Endothelial cell of umbilical vein (primary cell): ENCODE measurements at regions of chr9 and their contacts with region 1.

Region 1: DNA sequence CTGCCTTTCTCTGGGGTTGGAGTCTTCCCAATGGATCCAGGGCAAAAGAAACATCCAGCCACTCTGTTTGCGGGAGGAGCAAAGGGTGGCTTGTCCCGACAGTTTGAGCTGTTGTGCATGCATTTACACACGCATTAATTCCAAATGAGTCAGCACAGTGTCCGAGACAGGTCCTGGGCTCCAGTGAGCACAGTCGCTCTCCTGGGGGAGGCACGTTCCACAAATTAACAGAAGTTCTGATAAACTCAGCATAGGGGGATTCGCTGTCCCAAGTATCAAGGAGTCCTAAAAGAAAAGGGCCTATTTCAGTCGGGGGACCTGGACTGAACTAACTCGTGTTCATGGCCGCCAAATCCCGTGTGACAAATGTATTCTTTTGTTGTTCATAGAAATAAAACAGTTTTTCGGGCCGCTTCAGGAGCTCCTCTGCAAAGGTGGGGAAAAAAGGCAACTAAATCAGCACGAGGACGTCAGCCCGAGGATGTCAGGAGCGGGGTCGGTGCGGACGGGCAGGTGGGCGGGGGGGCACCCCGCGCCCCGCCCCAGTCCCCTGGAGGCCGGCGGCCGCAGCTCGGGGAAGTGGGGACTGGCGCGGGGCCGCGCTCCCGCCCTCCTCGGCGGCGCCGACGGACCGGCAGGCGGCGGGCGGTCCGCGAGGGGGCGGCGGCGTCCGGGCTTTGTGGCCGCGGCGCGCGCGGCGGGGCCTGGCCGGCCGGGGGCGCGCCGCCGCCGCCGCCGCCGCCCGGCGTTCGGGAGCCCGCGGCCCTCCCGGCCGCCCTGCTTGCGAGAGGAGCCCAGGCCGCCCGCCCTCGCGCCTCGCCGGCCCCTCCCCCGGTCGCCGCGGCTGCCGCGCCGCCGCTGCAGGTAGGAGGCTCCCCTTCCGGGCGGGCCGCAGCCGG is at the start of gene MSANTD3:
- DNase-seq: peak; percentile 84
- H3K4me3 ChIP-seq: peak within 1 kb of the TSS; percentile 91 to 96 (median 94)
- H3K27ac ChIP-seq: peak within 1 kb of the TSS; percentile 98
- H3K4me1 ChIP-seq: peaks cover 36% of the 10 kb centered on the region
- H3K27me3 ChIP-seq: no peaks in the 10 kb centered on the region
- CTCF ChIP-seq: no peak
- POLR2A ChIP-seq: peak; percentile 59
- total RNA-seq, gene MSANTD3: 82.7 and 88.5 TPM in 2 replicates

Region 2: GRCh38 chr9:100167915-100168654 is 258.7 kb before region 1 on chr9:
- CTCF ChIA-PET with region 1: no interaction called
- POLR2A ChIA-PET with region 1: no interaction called
- dilution Hi-C with region 1: no loop called
- intact Hi-C with region 1: no loop called
- DNase-seq: no peak
- H3K4me3 ChIP-seq: no peak overlapping the region
- H3K27ac ChIP-seq: no peak overlapping the region
- H3K4me1 ChIP-seq: peaks cover 8% of the 10 kb centered on the region
- H3K27me3 ChIP-seq: no peaks in the 10 kb centered on the region
- CTCF ChIP-seq: no peak
- POLR2A ChIP-seq: no peak

Region 3: DNA sequence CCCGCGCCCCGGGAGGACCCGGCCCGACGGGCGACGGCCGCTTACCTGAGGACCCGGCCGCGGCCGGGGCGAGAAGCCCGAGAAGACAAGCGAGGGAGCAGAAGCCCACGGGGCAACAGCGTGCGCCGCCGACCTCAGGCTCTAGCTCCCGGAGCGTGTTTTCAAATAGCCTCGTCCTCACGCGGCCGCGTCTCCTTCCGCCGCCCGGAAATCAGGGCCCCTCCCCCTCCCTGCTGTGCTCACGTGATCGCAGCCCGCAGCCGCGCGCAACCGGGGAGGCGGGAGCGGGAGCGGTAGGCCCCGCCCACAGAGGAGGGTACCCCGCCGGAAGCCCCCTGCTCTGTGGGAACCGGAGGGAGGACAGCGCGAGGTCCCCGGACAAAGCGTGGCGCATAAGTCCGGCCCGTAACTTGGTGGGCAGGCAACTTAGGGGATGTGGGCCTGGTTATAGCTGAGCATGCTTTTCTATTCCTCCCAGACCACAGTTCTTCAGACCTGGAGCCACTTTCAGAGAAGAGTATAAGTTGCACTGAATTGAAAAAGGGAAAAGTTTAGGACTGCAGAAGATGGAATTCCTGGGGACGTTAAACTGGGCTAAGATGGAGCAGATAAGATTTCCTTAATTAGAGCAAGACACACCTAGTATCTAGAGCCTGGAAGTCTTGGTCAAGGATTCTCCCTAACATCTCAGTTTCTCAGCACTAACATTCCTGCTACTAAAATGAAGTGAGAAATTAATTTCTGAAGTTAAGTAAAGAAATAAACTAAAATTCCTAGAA is 73.9 kb before region 1 on chr9 and contains the start of gene TEX10:
- CTCF ChIA-PET with region 1: interaction called, 6 read pairs
- POLR2A ChIA-PET with region 1: interaction called, 3 read pairs
- dilution Hi-C with region 1: loop called (anchors 25 kb)
- intact Hi-C with region 1: loop called (anchors 1 kb)
- DNase-seq: peak; percentile 91
- H3K4me3 ChIP-seq: peak within 1 kb of the TSS; percentile 47 to 89 (median 88)
- H3K27ac ChIP-seq: peak within 1 kb of the TSS; percentile 69
- H3K4me1 ChIP-seq: peaks cover 10% of the 10 kb centered on the region
- H3K27me3 ChIP-seq: no peaks in the 10 kb centered on the region
- CTCF ChIP-seq: no peak
- POLR2A ChIP-seq: peak; percentile 59
- total RNA-seq, gene TEX10: 20.5 and 21.2 TPM in 2 replicates

Region 4: DNA sequence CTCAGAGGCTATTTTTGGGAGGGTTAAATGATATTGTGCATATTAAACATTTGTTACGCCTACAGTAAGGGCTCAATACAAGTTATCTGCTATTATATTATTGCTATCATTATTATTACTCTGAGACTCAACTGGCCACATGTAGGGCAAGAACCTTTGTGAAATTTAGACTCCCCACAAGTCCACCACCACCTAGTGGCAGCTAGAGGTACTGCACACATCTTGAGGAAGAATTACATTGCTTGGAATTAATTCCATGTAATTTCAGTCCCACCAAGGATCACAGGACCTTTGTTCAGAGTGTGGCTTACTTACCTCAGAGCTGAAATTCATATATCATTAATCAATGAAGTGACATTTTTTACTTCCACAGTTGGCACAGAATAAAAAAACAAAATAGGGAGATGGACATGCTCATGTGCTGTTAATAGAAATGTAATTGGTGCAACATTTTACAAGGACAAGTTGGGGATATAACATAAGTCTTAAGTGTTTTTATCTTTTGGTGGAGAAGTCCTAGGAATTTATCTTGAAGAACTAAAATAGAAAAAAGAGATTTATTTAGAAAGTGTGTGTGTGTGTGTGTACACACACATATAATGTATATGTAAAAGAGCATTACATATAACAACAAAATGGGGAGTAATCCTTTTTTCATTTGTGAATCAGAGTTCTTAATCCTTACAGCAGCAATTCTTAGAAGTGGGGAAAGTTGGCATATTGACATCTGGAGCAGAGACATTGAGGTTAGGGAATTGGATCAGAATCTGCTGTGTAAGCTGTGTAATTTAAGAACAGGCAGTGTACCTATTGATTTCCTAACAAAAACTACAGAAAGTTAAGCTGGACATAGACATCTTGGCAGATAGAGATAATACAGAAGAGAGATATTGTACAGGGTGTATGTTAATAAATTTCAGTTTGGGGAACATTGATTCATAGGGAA is 11.4 kb after region 1 on chr9:
- CTCF ChIA-PET with region 1: interaction called, 10 read pairs
- POLR2A ChIA-PET with region 1: interaction called, 3 read pairs
- dilution Hi-C with region 1: no loop called
- intact Hi-C with region 1: no loop called
- DNase-seq: peak; percentile 83
- H3K4me3 ChIP-seq: no peak overlapping the region
- H3K27ac ChIP-seq: no peak overlapping the region
- H3K4me1 ChIP-seq: no peaks in the 10 kb centered on the region
- H3K27me3 ChIP-seq: no peaks in the 10 kb centered on the region
- CTCF ChIP-seq: peak; percentile 75 to 87
- POLR2A ChIP-seq: no peak

Region 5: DNA sequence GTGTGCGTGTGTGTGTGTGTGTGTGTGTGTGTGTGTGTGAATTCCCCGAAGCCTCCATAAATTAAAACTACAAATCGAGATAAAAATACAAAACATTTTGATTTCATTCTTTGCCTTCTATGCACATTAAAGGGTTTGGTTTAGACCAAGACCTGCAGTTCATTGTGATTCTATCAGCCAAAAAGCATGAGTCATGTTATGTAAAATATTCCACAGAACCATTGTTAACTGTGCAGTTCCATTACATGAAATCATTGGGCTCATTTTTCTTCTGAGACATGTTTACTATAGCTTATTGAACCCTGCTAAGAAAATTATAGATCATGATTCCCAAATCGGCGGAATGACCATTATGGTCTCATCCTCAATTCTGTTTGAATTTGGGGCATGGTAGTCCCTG is 162.8 kb after region 1 on chr9:
- CTCF ChIA-PET with region 1: no interaction called
- POLR2A ChIA-PET with region 1: interaction called, 3 read pairs
- dilution Hi-C with region 1: no loop called
- intact Hi-C with region 1: loop called (anchors 2 kb)
- DNase-seq: peak; percentile 81
- H3K4me3 ChIP-seq: no peak overlapping the region
- H3K27ac ChIP-seq: peak overlapping the region; percentile 4
- H3K4me1 ChIP-seq: peaks cover 31% of the 10 kb centered on the region
- H3K27me3 ChIP-seq: no peaks in the 10 kb centered on the region
- CTCF ChIP-seq: no peak
- POLR2A ChIP-seq: no peak